ENCODE measurements at regions of chr12 and their contacts with region 1.

Region 1: DNA sequence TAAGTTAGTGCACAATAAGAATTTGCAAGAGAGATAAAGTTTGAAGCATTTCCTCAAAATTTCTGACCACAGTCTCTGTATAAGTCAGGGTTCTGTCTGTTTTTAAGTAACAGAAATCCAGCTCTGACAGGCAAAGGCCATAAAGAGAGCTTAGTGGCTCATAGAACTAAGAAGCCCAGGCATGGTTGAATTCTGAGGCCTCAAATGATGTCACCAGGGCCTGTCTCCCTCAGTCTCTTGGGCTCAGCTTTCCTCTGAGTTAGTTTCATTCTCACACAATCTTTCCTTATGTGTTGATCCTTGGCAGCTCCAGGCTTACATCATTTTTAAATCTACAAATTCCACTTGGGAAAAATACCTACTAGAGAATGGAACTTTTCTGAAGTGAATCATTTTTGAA is 173.4 kb upstream of the ATP2B1 start:
- DNase-seq: peak in 1 of 5 donors; percentile 53
- H3K4me3 ChIP-seq: no peak overlapping the region
- H3K4me3 Mint-ChIP-seq: peak overlapping the region in 6 of 8 donors; percentile 18 to 79 (median 58)
- H3K27ac ChIP-seq: peak overlapping the region; percentile 62
- H3K27ac Mint-ChIP-seq: peak overlapping the region; percentile 91 to 98 (median 96)
- H3K4me1 ChIP-seq: peaks cover 65% of the 10 kb centered on the region
- H3K4me1 Mint-ChIP-seq: peaks cover 42 to 67% (median 54%) of the 10 kb centered on the region in 4 donors
- H3K27me3 ChIP-seq: no peaks in the 10 kb centered on the region
- H3K27me3 Mint-ChIP-seq: no peaks in the 10 kb centered on the region

Region 2: GRCh38 chr12:89695100-89695499 is 186.9 kb before region 1 on chr12:
- CTCF ChIA-PET with region 1: no interaction called
- POLR2A ChIA-PET with region 1: no interaction called
- intact Hi-C with region 1: no loop called
- DNase-seq: no peak
- H3K4me3 ChIP-seq: no peak overlapping the region
- H3K4me3 Mint-ChIP-seq: peak overlapping the region in 2 of 8 donors; percentile 46 to 49
- H3K27ac ChIP-seq: no peak overlapping the region
- H3K27ac Mint-ChIP-seq: peak overlapping the region in 1 of 7 donors; percentile 27
- H3K4me1 ChIP-seq: peaks cover 96% of the 10 kb centered on the region
- H3K4me1 Mint-ChIP-seq: peaks cover 69 to 94% (median 81%) of the 10 kb centered on the region in 4 donors
- H3K27me3 ChIP-seq: no peaks in the 10 kb centered on the region
- H3K27me3 Mint-ChIP-seq: no peaks in the 10 kb centered on the region

Region 3: GRCh38 chr12:89762498-89763188 is 119.4 kb before region 1 on chr12:
- CTCF ChIA-PET with region 1: interaction called, 3 read pairs
- POLR2A ChIA-PET with region 1: interaction called, 4 read pairs
- intact Hi-C with region 1: loop called (anchors 5 kb)
- DNase-seq: no peak
- H3K4me3 ChIP-seq: no peak overlapping the region
- H3K4me3 Mint-ChIP-seq: peak overlapping the region in 1 of 8 donors; percentile 15
- H3K27ac ChIP-seq: no peak overlapping the region
- H3K27ac Mint-ChIP-seq: peak overlapping the region in 3 of 7 donors; percentile 9 to 75 (median 29)
- H3K4me1 ChIP-seq: peaks cover 50% of the 10 kb centered on the region
- H3K4me1 Mint-ChIP-seq: peaks cover 43 to 90% (median 59%) of the 10 kb centered on the region in 4 donors
- H3K27me3 ChIP-seq: no peaks in the 10 kb centered on the region
- H3K27me3 Mint-ChIP-seq: no peaks in the 10 kb centered on the region

Region 4: GRCh38 chr12:89870413-89871184 is 11.5 kb before region 1 on chr12:
- CTCF ChIA-PET with region 1: interaction called, 4 read pairs
- POLR2A ChIA-PET with region 1: interaction called, 100 read pairs
- intact Hi-C with region 1: no loop called
- DNase-seq: no peak
- H3K4me3 ChIP-seq: no peak overlapping the region
- H3K4me3 Mint-ChIP-seq: no peak overlapping the region
- H3K27ac ChIP-seq: no peak overlapping the region
- H3K27ac Mint-ChIP-seq: peak overlapping the region in 1 of 7 donors; percentile 29
- H3K4me1 ChIP-seq: peaks cover 1% of the 10 kb centered on the region
- H3K4me1 Mint-ChIP-seq: peaks cover 3 to 6% (median 4%) of the 10 kb centered on the region in 4 donors
- H3K27me3 ChIP-seq: no peaks in the 10 kb centered on the region
- H3K27me3 Mint-ChIP-seq: no peaks in the 10 kb centered on the region

Region 5: GRCh38 chr12:89918181-89918868 is 36.3 kb after region 1 on chr12:
- CTCF ChIA-PET with region 1: interaction called, 6 read pairs
- POLR2A ChIA-PET with region 1: interaction called, 4 read pairs
- intact Hi-C with region 1: loop called (anchors 5 kb)
- DNase-seq: no peak
- H3K4me3 ChIP-seq: no peak overlapping the region
- H3K4me3 Mint-ChIP-seq: peak overlapping the region in 2 of 8 donors; percentile 40 to 41
- H3K27ac ChIP-seq: no peak overlapping the region
- H3K27ac Mint-ChIP-seq: peak overlapping the region in 6 of 7 donors; percentile 5 to 89 (median 54)
- H3K4me1 ChIP-seq: no peaks in the 10 kb centered on the region
- H3K4me1 Mint-ChIP-seq: peaks cover 8 to 12% (median 9%) of the 10 kb centered on the region in 4 donors
- H3K27me3 ChIP-seq: no peaks in the 10 kb centered on the region
- H3K27me3 Mint-ChIP-seq: no peaks in the 10 kb centered on the region

Region 6: GRCh38 chr12:89943463-89943862 is 61.4 kb after region 1 on chr12:
- CTCF ChIA-PET with region 1: interaction called, 3 read pairs
- POLR2A ChIA-PET with region 1: interaction called, 14 read pairs
- intact Hi-C with region 1: loop called (anchors 2 kb)
- DNase-seq: no peak
- H3K4me3 ChIP-seq: no peak overlapping the region
- H3K4me3 Mint-ChIP-seq: no peak overlapping the region
- H3K27ac ChIP-seq: peak overlapping the region; percentile 41
- H3K27ac Mint-ChIP-seq: peak overlapping the region; percentile 2 to 97 (median 87)
- H3K4me1 ChIP-seq: peaks cover 38% of the 10 kb centered on the region
- H3K4me1 Mint-ChIP-seq: peaks cover 37 to 58% (median 47%) of the 10 kb centered on the region in 4 donors
- H3K27me3 ChIP-seq: no peaks in the 10 kb centered on the region
- H3K27me3 Mint-ChIP-seq: no peaks in the 10 kb centered on the region

Region 7: GRCh38 chr12:89949457-89950195 is 67.6 kb after region 1 on chr12:
- CTCF ChIA-PET with region 1: interaction called, 3 read pairs
- POLR2A ChIA-PET with region 1: interaction called, 14 read pairs
- intact Hi-C with region 1: loop called (anchors 2 kb)
- DNase-seq: peak; percentile 87 to 94 (median 90)
- H3K4me3 ChIP-seq: no peak overlapping the region
- H3K4me3 Mint-ChIP-seq: peak overlapping the region; percentile 11 to 77 (median 59)
- H3K27ac ChIP-seq: peak overlapping the region; percentile 83
- H3K27ac Mint-ChIP-seq: peak overlapping the region; percentile 74 to 98 (median 93)
- H3K4me1 ChIP-seq: peaks cover 53% of the 10 kb centered on the region
- H3K4me1 Mint-ChIP-seq: peaks cover 49 to 64% (median 58%) of the 10 kb centered on the region in 4 donors
- H3K27me3 ChIP-seq: no peaks in the 10 kb centered on the region
- H3K27me3 Mint-ChIP-seq: no peaks in the 10 kb centered on the region

Measured in CD4-positive, alpha-beta memory T cell (primary cell).